Natural killer cell (primary cell): ENCODE measurements at regions of chr17 and their contacts with region 1.

Region 1: GRCh38 chr17:8954339-8954738 is 11.2 kb downstream of the PIK3R5 start:
- DNase-seq: peak; percentile 79 to 95
- ATAC-seq: peak; percentile 77 to 95 (median 87)
- H3K4me3 ChIP-seq: no peak overlapping the region
- H3K4me3 Mint-ChIP-seq: peak overlapping the region; percentile 93
- H3K27ac ChIP-seq: peak overlapping the region; percentile 81
- H3K27ac Mint-ChIP-seq: peak overlapping the region in 1 of 2 donors; percentile 89
- H3K4me1 ChIP-seq: peaks cover 76% of the 10 kb centered on the region
- H3K4me1 Mint-ChIP-seq: peaks cover 96 to 98% of the 10 kb centered on the region in 2 donors
- H3K27me3 ChIP-seq: no peaks in the 10 kb centered on the region
- H3K27me3 Mint-ChIP-seq: no peaks in the 10 kb centered on the region
- CTCF ChIP-seq: no peak

Region 2: GRCh38 chr17:8857919-8858318 is 96.4 kb before region 1 on chr17:
- intact Hi-C with region 1: no loop called
- DNase-seq: peak in 1 of 2 donors; percentile 31
- ATAC-seq: peak in 1 of 3 donors; percentile 22
- H3K4me3 ChIP-seq: no peak overlapping the region
- H3K4me3 Mint-ChIP-seq: no peak overlapping the region
- H3K27ac ChIP-seq: no peak overlapping the region
- H3K27ac Mint-ChIP-seq: peak overlapping the region in 1 of 2 donors; percentile 25
- H3K4me1 ChIP-seq: peaks cover 47% of the 10 kb centered on the region
- H3K4me1 Mint-ChIP-seq: peaks cover 24 to 27% of the 10 kb centered on the region in 2 donors
- H3K27me3 ChIP-seq: no peaks in the 10 kb centered on the region
- H3K27me3 Mint-ChIP-seq: no peaks in the 10 kb centered on the region
- CTCF ChIP-seq: no peak

Region 3: DNA sequence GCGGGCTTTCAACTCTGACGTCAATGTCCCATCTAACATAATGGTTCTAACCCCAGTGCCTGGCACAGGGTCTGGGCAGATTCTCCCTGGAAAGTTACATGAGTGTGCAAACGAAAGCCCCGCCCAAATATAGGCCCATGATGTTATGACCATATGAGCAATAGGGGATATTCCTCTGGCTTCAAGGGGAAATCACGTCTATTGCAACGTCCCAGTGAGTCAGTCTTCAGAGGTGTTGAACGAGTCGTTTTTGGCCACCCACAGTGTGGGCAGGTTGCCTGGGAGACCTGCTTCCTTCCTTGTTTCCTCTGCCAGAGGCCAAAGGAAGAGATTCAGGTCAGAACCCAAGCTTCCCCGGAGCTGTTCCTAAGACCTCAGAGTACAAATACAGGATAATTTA is 19.1 kb before region 1 on chr17:
- intact Hi-C with region 1: loop called (anchors 1 kb)
- DNase-seq: peak; percentile 63 to 84
- ATAC-seq: peak; percentile 81 to 96 (median 95)
- H3K4me3 ChIP-seq: no peak overlapping the region
- H3K4me3 Mint-ChIP-seq: peak overlapping the region; percentile 85
- H3K27ac ChIP-seq: peak overlapping the region; percentile 86
- H3K27ac Mint-ChIP-seq: peak overlapping the region in 1 of 2 donors; percentile 98
- H3K4me1 ChIP-seq: peaks cover 34% of the 10 kb centered on the region
- H3K4me1 Mint-ChIP-seq: peaks cover 83 to 90% of the 10 kb centered on the region in 2 donors
- H3K27me3 ChIP-seq: no peaks in the 10 kb centered on the region
- H3K27me3 Mint-ChIP-seq: no peaks in the 10 kb centered on the region
- CTCF ChIP-seq: no peak